IMR-90 (cell line): ENCODE measurements at regions of chr5 and their contacts with region 1.

Region 1: DNA sequence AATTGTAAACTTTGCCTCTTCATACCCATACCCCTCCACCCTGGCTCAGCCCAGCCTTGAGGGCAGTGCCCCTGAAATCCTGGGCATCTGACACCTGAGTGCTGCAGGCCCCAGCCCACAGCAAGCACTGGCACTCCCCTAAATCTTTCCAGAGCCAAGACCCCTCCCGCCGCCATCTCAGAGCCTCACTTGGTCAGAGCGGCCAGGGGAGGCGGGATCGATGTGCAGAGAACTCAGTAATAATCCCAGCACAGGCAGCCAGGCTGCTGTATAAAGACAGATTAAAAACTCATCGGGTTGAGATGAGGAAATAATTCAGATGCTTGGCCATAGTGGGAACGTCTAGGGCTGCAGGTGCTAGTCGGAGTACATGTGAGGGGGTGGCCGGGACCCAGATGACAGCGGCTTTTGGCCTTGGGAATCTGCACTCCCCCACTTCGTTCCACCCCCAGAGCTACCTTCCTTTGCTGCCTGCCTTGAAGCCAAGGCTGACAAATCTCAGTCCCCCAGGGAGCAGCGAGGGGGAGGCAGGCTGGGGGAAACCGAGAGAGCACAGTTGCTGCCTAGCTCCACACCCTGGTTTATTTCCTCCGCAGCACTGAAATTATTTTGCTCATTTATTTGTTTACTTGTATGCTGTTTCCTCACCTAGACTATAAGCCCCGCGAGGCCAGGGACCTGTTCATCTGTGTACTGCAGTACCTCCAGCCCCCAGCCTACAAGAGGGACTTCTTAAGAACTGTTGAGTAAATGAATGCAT is 19.5 kb upstream of the ARAP3 start:
- DNase-seq: no peak
- ATAC-seq: no peak
- H3K4me3 ChIP-seq: no peak overlapping the region
- H3K27ac ChIP-seq: no peak overlapping the region
- H3K4me1 ChIP-seq: no peaks in the 10 kb centered on the region
- H3K27me3 ChIP-seq: peaks cover 92% of the 10 kb centered on the region
- CTCF ChIP-seq: no peak
- POLR2A ChIP-seq: no peak
- RAD21 ChIP-seq: no peak

Region 2: GRCh38 chr5:141811287-141812155 is 110.0 kb after region 1 on chr5:
- CTCF ChIA-PET with region 1: no interaction called
- POLR2A ChIA-PET with region 1: no interaction called
- dilution Hi-C with region 1: no loop called
- in situ Hi-C with region 1: no loop called
- intact Hi-C with region 1: loop called (anchors 5 kb)
- DNase-seq: no peak
- ATAC-seq: 0 out of 2 replicates have a peak, but pooled peaks have one; percentile 24
- H3K4me3 ChIP-seq: no peak overlapping the region
- H3K27ac ChIP-seq: no peak overlapping the region
- H3K4me1 ChIP-seq: no peaks in the 10 kb centered on the region
- H3K27me3 ChIP-seq: peaks cover 81% of the 10 kb centered on the region
- CTCF ChIP-seq: peak; percentile 42
- POLR2A ChIP-seq: no peak
- RAD21 ChIP-seq: no peak; the same call in 1 of the 2 replicates

Region 3: GRCh38 chr5:141866149-141867120 is 164.9 kb after region 1 on chr5:
- CTCF ChIA-PET with region 1: no interaction called
- POLR2A ChIA-PET with region 1: no interaction called
- dilution Hi-C with region 1: no loop called
- in situ Hi-C with region 1: no loop called
- intact Hi-C with region 1: no loop called
- DNase-seq: no peak
- ATAC-seq: no peak
- H3K4me3 ChIP-seq: no peak overlapping the region
- H3K27ac ChIP-seq: no peak overlapping the region
- H3K4me1 ChIP-seq: no peaks in the 10 kb centered on the region
- H3K27me3 ChIP-seq: peaks cover 50% of the 10 kb centered on the region
- CTCF ChIP-seq: no peak
- POLR2A ChIP-seq: no peak
- RAD21 ChIP-seq: no peak